ENCODE measurements at regions of chr15 and their contacts with region 1.

Region 1: GRCh38 chr15:38072348-38073177 is 138.1 kb downstream of the TMCO5A start:
- DNase-seq: peak; percentile 83 to 99 (median 90)

Region 2: GRCh38 chr15:38354315-38354929 is 281.9 kb after region 1 on chr15:
- intact Hi-C with region 1: loop called (anchors 10 kb)
- DNase-seq: peak in 6 of 10 donors; percentile 46 to 88 (median 64)

Measured in posterior cingulate gyrus (tissue), 11 donors.